Natural killer cell (primary cell): ENCODE measurements at regions of chr12 and their contacts with region 1.

Region 1: DNA sequence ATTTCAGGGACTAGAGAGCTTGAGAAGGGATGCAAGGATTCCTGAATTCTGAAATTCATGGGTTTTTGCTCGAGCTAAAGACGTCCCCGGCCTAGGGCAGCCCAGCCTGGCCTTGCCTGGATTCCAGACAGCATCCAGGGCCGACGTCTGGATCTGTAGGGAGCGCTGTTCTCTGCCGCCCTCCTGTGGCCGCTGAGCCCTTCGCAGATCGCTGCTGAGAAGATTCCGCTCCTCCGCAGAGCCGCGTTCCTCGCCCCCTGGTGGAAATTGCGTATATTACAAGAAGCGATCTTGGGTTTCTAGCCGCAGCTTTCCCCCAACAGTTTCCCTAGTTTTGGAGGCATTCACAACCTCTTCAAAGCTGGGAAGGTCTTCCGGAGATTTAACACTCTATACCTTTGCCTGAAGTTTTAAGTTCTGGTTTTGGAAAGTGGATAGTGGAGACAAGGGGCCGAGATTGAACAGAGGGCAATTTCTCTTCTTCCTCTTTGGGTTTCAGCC is 5.1 kb downstream of the CISTR start:
- DNase-seq: peak; percentile 83 to 95
- ATAC-seq: peak; percentile 87 to 91 (median 88)
- H3K4me3 ChIP-seq: no peak overlapping the region
- H3K4me3 Mint-ChIP-seq: peak overlapping the region; percentile 50
- H3K27ac ChIP-seq: no peak overlapping the region
- H3K27ac Mint-ChIP-seq: no peak overlapping the region
- H3K4me1 ChIP-seq: peaks cover 36% of the 10 kb centered on the region
- H3K4me1 Mint-ChIP-seq: peaks cover 20 to 22% of the 10 kb centered on the region in 2 donors
- H3K27me3 ChIP-seq: peaks cover 32% of the 10 kb centered on the region
- H3K27me3 Mint-ChIP-seq: peaks cover 32 to 47% of the 10 kb centered on the region in 2 donors
- CTCF ChIP-seq: peak; percentile 100

Region 2: DNA sequence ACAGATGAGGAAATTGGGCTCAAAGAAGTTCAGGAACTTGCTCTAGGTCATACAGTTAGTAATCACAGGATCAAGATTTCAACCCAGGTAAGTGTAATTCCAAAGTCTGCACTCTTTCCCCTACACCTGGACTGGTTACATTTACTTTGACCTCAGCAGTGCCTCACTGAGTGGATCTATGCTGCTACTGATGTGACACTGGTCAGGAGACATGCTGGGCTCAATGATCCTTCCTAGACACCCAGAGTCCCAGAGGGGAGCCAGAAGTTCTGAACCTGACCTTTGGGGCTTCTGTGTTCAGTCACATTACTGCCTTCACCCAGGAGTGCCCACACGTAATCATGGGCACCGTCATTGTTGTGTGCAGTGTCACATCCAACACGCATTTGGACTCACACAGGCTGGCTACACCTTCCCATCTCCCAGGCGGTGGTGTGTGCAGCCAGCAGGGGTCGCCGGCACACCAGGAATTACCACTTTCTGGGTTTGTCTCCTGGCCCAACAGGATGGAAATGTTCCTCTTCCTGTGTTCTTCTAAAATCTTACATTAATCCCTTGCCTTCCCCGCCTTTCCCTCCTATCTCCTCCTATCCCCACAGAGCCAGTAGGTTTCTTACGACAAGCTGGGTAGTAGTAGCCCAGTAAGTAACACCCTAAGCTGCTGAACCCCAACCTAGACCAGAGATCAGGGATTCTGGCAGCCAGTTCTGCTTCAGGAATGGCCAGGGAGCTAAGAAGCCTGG is 45.0 kb before region 1 on chr12:
- intact Hi-C with region 1: loop called (anchors 1 kb)
- DNase-seq: peak; percentile 64 to 85
- ATAC-seq: peak; percentile 72 to 93 (median 92)
- H3K4me3 ChIP-seq: no peak overlapping the region
- H3K4me3 Mint-ChIP-seq: no peak overlapping the region
- H3K27ac ChIP-seq: no peak overlapping the region
- H3K27ac Mint-ChIP-seq: no peak overlapping the region
- H3K4me1 ChIP-seq: peaks cover 3% of the 10 kb centered on the region
- H3K4me1 Mint-ChIP-seq: peaks cover 11% of the 10 kb centered on the region in 2 donors
- H3K27me3 ChIP-seq: peaks cover 44% of the 10 kb centered on the region
- H3K27me3 Mint-ChIP-seq: peaks cover 63 to 81% of the 10 kb centered on the region in 2 donors
- CTCF ChIP-seq: peak; percentile 86

Region 3: DNA sequence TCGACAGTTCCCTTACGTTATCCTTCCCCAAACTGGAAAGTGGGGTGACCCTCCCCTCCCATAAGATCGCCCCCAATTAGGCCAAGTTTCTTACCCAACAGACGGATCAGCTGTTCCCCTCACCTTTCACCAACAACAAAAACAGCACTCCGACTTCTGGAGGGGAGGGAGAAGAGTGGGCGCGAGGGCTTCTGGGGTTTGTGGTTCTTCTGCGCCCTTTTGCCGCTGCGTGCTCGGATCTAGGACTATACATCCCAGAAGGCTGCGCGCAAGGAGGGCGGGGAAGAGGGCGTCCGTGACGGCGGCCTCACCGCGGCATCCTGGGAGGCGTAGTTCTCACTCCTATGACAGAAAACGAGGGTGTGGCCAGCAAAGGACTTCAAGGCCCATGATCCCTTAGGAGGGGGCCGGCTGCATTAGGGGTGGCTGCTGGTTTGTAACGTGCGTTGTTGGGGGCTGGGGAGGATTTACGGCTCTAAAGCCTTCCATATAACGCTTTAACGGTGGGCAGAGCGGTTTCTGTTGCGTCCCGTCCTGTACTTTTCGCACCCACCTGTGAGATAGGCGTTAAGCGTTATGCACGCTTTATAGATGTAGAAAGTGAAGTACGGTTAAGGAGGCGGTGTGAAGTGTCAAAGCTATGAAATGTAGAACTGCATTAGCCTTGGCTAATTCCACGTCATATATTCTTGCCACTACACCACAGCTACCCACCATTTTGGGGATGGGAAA is 19.2 kb before region 1 on chr12 and contains the start of gene CALCOCO1:
- intact Hi-C with region 1: loop called (anchors 1 kb)
- DNase-seq: peak; percentile 92 to 99
- ATAC-seq: peak; percentile 92 to 99 (median 94)
- H3K4me3 ChIP-seq: peak within 1 kb of the TSS; percentile 43
- H3K4me3 Mint-ChIP-seq: peak within 1 kb of the TSS; percentile 93
- H3K27ac ChIP-seq: peak within 1 kb of the TSS; percentile 76
- H3K27ac Mint-ChIP-seq: peak within 1 kb of the TSS; percentile 90 to 92
- H3K4me1 ChIP-seq: peaks cover 18% of the 10 kb centered on the region
- H3K4me1 Mint-ChIP-seq: peaks cover 30 to 36% of the 10 kb centered on the region in 2 donors
- H3K27me3 ChIP-seq: no peaks in the 10 kb centered on the region
- H3K27me3 Mint-ChIP-seq: peaks cover 4 to 10% of the 10 kb centered on the region in 2 donors
- CTCF ChIP-seq: no peak
- total RNA-seq, gene CALCOCO1: 215 to 256 (median 226) TPM

Region 4: DNA sequence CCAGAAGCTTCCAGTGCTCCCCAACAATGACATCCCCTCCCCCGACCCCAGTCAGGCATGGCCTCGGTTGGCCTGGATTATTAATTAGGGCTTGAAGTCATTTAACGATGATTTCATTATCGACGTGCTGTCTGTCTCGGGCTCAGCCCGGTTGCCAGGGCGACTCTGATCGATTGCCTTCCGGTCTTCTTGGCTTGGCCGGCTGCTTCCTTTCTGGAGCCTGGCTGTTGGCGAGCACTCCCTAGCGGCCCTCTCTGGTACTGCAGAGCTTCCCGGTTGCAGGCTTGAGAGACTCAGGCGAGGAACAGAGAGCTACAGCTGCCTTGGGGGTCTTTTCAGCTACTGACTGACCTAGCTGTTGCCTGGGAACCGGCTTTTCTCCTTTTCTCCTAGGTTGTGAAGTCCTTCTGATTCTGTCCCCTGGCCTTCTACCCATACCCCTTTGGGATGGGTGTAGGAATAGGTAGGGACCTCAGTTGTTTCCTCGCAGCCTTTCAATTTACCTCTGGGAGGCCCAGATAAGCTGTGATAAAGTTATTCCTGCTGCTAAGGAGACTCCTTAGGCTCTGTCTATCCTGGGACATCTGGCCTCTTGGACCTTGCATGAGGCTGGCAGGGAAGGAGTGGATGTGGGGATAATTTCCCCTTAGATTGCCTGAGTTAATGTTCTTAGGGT is 10.6 kb after region 1 on chr12:
- intact Hi-C with region 1: loop called (anchors 1 kb)
- DNase-seq: peak; percentile 84 to 88
- ATAC-seq: peak; percentile 86 to 100 (median 96)
- H3K4me3 ChIP-seq: no peak overlapping the region
- H3K4me3 Mint-ChIP-seq: peak overlapping the region; percentile 65
- H3K27ac ChIP-seq: no peak overlapping the region
- H3K27ac Mint-ChIP-seq: peak overlapping the region in 1 of 2 donors; percentile 71
- H3K4me1 ChIP-seq: peaks cover 20% of the 10 kb centered on the region
- H3K4me1 Mint-ChIP-seq: peaks cover 16% of the 10 kb centered on the region in 2 donors
- H3K27me3 ChIP-seq: no peaks in the 10 kb centered on the region
- H3K27me3 Mint-ChIP-seq: peaks cover 33 to 36% of the 10 kb centered on the region in 2 donors
- CTCF ChIP-seq: peak; percentile 98

Region 5: GRCh38 chr12:53899232-53899631 is 152.6 kb after region 1 on chr12:
- intact Hi-C with region 1: no loop called
- DNase-seq: no peak
- ATAC-seq: no peak
- H3K4me3 ChIP-seq: no peak overlapping the region
- H3K4me3 Mint-ChIP-seq: no peak overlapping the region
- H3K27ac ChIP-seq: no peak overlapping the region
- H3K27ac Mint-ChIP-seq: no peak overlapping the region
- H3K4me1 ChIP-seq: no peaks in the 10 kb centered on the region
- H3K4me1 Mint-ChIP-seq: no peaks in the 10 kb centered on the region
- H3K27me3 ChIP-seq: peaks cover 16% of the 10 kb centered on the region
- H3K27me3 Mint-ChIP-seq: peaks cover 33 to 55% of the 10 kb centered on the region in 2 donors
- CTCF ChIP-seq: no peak